H1 (cell line): ENCODE measurements at regions of chr3 and their contacts with region 1.

Region 1: DNA sequence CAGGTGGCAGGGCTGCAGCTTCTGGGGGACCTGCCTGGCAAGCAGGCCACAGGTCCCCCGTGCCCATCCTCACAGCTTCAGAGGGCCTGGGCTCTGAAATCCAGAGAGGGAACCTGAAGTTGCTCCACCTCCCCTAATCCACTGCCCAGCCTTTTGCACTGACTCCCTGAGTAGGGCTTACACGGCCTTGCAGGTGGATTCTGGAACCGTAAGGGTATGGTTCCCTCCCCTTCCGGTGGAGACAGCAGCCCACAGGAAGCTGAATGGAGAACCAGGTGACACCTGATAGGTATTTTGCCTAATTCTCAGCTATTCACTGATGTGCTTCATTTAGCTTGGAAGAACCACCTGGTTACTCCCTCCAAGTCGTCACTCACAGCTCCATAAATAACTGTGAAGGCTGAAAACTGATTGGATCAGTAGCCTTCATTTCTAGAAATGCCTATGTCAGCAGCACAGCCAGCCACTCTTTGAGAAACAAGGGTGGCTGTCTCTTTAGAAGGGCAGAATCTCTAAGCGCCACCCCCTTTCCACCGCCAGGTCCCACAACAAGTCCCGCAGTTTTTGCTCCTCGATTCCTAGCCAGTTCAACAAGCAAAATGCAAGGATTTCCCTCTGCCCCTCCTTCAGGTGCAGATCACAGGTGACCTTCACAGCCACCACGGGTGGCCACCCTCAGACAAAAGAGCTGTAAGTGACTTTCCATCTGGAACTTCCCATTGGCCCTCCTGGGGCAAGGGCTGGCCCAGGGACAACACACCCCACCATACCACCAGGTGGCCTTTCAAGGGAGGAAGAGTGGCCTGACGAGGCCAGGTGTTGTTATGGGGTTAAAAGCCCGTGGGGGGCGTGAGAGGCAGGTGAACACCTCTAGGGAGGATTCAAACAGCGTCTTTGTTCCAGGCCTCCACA is 112.9 kb downstream of the SEC22A start:
- DNase-seq: peak; percentile 90 to 93
- H3K4me3 ChIP-seq: peak overlapping the region in 3 of 4 experiments; percentile 20 to 50 (median 33); a peak in 7 of 8 replicates
- H3K27ac ChIP-seq: peak overlapping the region; percentile 78; the same call in 1 of the 2 replicates
- H3K4me1 ChIP-seq: peaks cover 25 to 60% (median 37%) of the 10 kb centered on the region in 4 experiments
- H3K27me3 ChIP-seq: no peaks in the 10 kb centered on the region; a peak in 1 of 7 replicates
- CTCF ChIP-seq: peak in 2 of 3 experiments; percentile 49 to 56; a peak in 3 of 4 replicates
- EP300 ChIP-seq: peak in 1 of 2 experiments; percentile 91; a peak in 1 of 3 replicates
- POLR2A ChIP-seq: peak in 1 of 2 experiments; percentile 40; a peak in 2 of 3 replicates
- RAD21 ChIP-seq: peak; percentile 9 to 24; a peak in 2 of 4 replicates

Region 2: DNA sequence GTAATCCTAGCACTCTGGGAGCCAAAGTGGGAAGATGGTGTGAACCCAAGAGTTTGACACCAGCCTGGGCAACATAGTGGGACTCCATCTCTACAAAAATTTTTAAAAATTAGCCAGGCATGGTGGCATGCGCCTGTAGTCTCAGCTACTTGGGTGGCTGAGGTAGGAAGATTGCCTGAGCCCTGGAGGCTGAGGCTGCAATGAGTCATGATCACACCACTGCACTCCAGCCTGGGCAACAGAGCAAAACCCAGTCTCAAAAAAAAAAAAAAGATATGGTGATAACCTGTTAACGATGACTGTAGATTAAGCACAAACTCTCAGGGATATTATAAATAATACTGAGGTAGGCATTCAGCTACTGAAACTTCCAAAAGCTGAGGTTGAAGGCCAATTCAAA is 412.3 kb before region 1 on chr3:
- CTCF ChIA-PET with region 1: no interaction called
- POLR2A ChIA-PET with region 1: no interaction called
- DNase-seq: no peak
- H3K4me3 ChIP-seq: no peak overlapping the region
- H3K27ac ChIP-seq: no peak overlapping the region
- H3K4me1 ChIP-seq: no peaks in the 10 kb centered on the region; a peak in 1 of 7 replicates
- H3K27me3 ChIP-seq: no peaks in the 10 kb centered on the region
- CTCF ChIP-seq: no peak
- EP300 ChIP-seq: no peak
- POLR2A ChIP-seq: no peak
- RAD21 ChIP-seq: no peak

Region 3: GRCh38 chr3:123258811-123259420 is 55.7 kb before region 1 on chr3:
- CTCF ChIA-PET with region 1: no interaction called
- POLR2A ChIA-PET with region 1: no interaction called
- DNase-seq: no peak
- H3K4me3 ChIP-seq: no peak overlapping the region
- H3K27ac ChIP-seq: no peak overlapping the region
- H3K4me1 ChIP-seq: no peaks in the 10 kb centered on the region
- H3K27me3 ChIP-seq: no peaks in the 10 kb centered on the region
- CTCF ChIP-seq: peak in 2 of 3 experiments; percentile 22 to 52; a peak in 2 of 4 replicates
- EP300 ChIP-seq: no peak
- POLR2A ChIP-seq: no peak
- RAD21 ChIP-seq: peak; percentile 47 to 55

Region 4: GRCh38 chr3:123297627-123297899 is 17.1 kb before region 1 on chr3:
- CTCF ChIA-PET with region 1: interaction called, 245 read pairs
- POLR2A ChIA-PET with region 1: interaction called, 35 read pairs
- DNase-seq: no peak
- H3K4me3 ChIP-seq: no peak overlapping the region
- H3K27ac ChIP-seq: no peak overlapping the region
- H3K4me1 ChIP-seq: peaks cover 0 to 2% (median 0%) of the 10 kb centered on the region in 4 experiments; a peak in 1 of 7 replicates
- H3K27me3 ChIP-seq: no peaks in the 10 kb centered on the region
- CTCF ChIP-seq: peak in 2 of 3 experiments; percentile 31 to 51; a peak in 3 of 4 replicates
- EP300 ChIP-seq: no peak
- POLR2A ChIP-seq: no peak
- RAD21 ChIP-seq: peak; percentile 66 to 76